CD4-positive, alpha-beta memory T cell (primary cell): ENCODE measurements at regions of chr6 and their contacts with region 1.

Region 1: GRCh38 chr6:151390276-151391032 is 905 bp downstream of the ZBTB2 start:
- DNase-seq: peak; percentile 98 to 99 (median 99)
- H3K4me3 ChIP-seq: peak overlapping the region in 1 of 2 donors; percentile 86
- H3K4me3 Mint-ChIP-seq: peak overlapping the region; percentile 29 to 98 (median 74)
- H3K27ac ChIP-seq: peak overlapping the region; percentile 83
- H3K27ac Mint-ChIP-seq: peak overlapping the region; percentile 74 to 99 (median 82)
- H3K4me1 ChIP-seq: peaks cover 71% of the 10 kb centered on the region
- H3K4me1 Mint-ChIP-seq: peaks cover 39 to 76% (median 55%) of the 10 kb centered on the region in 4 donors
- H3K27me3 ChIP-seq: no peaks in the 10 kb centered on the region
- H3K27me3 Mint-ChIP-seq: peaks cover 0 to 2% of the 10 kb centered on the region in 2 donors

Region 2: GRCh38 chr6:150865406-150866146 is 524.9 kb before region 1 on chr6 and contains the start of gene MTHFD1L:
- CTCF ChIA-PET with region 1: no interaction called
- POLR2A ChIA-PET with region 1: interaction called, 3 read pairs
- intact Hi-C with region 1: loop called (anchors 5 kb)
- DNase-seq: peak; percentile 58 to 68 (median 66)
- H3K4me3 ChIP-seq: peak within 1 kb of the TSS; percentile 38 to 65
- H3K4me3 Mint-ChIP-seq: peak within 1 kb of the TSS; percentile 84 to 95 (median 88)
- H3K27ac ChIP-seq: peak within 1 kb of the TSS; percentile 49
- H3K27ac Mint-ChIP-seq: peak within 1 kb of the TSS; percentile 79 to 90 (median 86)
- H3K4me1 ChIP-seq: peaks cover 14% of the 10 kb centered on the region
- H3K4me1 Mint-ChIP-seq: peaks cover 6 to 14% (median 8%) of the 10 kb centered on the region in 4 donors
- H3K27me3 ChIP-seq: no peaks in the 10 kb centered on the region
- H3K27me3 Mint-ChIP-seq: peaks cover 5 to 9% of the 10 kb centered on the region in 2 donors
- total RNA-seq, gene MTHFD1L: 8.6 to 11.1 TPM

Region 3: DNA sequence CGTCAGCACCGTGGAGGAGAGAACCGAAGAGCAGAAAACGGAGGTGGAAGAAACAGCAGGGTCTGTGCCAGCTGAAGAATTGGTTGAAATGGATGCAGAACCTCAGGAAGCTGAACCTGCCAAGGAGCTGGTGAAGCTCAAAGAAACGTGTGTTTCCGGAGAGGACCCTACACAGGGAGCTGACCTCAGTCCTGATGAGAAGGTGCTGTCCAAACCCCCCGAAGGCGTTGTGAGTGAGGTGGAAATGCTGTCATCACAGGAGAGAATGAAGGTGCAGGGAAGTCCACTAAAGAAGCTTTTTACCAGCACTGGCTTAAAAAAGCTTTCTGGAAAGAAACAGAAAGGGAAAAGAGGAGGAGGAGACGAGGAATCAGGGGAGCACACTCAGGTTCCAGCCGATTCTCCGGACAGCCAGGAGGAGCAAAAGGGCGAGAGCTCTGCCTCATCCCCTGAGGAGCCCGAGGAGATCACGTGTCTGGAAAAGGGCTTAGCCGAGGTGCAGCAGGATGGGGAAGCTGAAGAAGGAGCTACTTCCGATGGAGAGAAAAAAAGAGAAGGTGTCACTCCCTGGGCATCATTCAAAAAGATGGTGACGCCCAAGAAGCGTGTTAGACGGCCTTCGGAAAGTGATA is 40.7 kb before region 1 on chr6:
- CTCF ChIA-PET with region 1: interaction called, 3 read pairs
- POLR2A ChIA-PET with region 1: interaction called, 10 read pairs
- intact Hi-C with region 1: no loop called
- DNase-seq: no peak
- H3K4me3 ChIP-seq: no peak overlapping the region
- H3K4me3 Mint-ChIP-seq: peak overlapping the region in 1 of 8 donors; percentile 8
- H3K27ac ChIP-seq: no peak overlapping the region
- H3K27ac Mint-ChIP-seq: peak overlapping the region in 2 of 7 donors; percentile 1 to 39
- H3K4me1 ChIP-seq: peaks cover 13% of the 10 kb centered on the region
- H3K4me1 Mint-ChIP-seq: no peaks in the 10 kb centered on the region
- H3K27me3 ChIP-seq: no peaks in the 10 kb centered on the region
- H3K27me3 Mint-ChIP-seq: peaks cover 0 to 5% of the 10 kb centered on the region in 2 donors

Region 4: DNA sequence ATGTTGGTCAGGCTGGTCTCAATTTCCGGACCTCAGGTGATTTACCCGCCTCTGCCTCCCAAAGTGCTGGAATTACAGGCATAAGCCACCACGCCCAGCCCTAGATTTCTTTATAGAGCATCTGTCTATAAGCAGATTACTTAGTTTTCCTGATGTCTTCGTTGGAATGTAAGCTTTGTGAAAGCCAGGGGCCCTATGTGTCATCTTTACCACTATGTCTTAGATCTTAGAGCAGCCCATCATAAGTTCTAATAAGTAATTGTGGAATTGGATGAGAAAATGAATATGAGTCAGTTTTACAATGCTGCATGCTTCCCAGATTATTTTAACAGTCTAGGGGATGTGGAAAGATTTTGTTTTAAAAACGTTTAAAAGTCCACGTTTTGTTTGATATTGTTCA is 10.0 kb after region 1 on chr6:
- CTCF ChIA-PET with region 1: interaction called, 55 read pairs
- POLR2A ChIA-PET with region 1: interaction called, 32 read pairs
- intact Hi-C with region 1: loop called (anchors 1 kb)
- DNase-seq: no peak
- H3K4me3 ChIP-seq: no peak overlapping the region
- H3K4me3 Mint-ChIP-seq: peak overlapping the region in 5 of 8 donors; percentile 7 to 29 (median 17)
- H3K27ac ChIP-seq: no peak overlapping the region
- H3K27ac Mint-ChIP-seq: peak overlapping the region in 5 of 7 donors; percentile 20 to 90 (median 38)
- H3K4me1 ChIP-seq: peaks cover 62% of the 10 kb centered on the region
- H3K4me1 Mint-ChIP-seq: peaks cover 43 to 74% (median 59%) of the 10 kb centered on the region in 4 donors
- H3K27me3 ChIP-seq: no peaks in the 10 kb centered on the region
- H3K27me3 Mint-ChIP-seq: no peaks in the 10 kb centered on the region

Region 5: DNA sequence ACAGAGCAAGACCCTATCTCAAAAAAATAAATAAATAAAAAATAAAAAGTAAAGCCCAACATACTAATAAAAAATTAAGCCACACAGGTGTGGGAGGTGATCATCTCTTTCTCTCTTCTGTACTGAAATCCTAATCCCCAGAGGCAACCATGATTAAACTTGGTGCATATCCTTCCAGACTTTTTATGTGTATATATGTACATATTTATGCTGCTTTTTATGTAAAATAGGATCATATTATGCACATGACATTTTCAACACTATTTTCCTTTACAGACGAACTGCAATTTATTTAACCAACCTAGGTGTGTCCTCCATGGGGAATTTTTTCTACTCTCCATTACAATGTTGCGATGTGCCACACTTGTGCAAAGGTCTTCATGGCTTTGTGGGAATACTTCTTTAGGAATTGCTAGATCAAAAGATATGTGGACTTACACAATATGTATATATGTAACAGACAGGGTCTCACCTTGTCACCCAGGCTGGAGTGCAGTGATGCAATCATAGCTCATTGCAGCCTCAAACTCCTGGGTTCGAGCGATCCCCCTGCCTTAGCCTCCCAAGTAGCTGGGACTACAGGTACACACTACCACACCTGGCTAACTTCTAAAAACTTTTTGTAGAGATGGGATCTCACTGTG is 37.8 kb after region 1 on chr6:
- CTCF ChIA-PET with region 1: no interaction called
- POLR2A ChIA-PET with region 1: no interaction called
- intact Hi-C with region 1: no loop called
- DNase-seq: no peak
- H3K4me3 ChIP-seq: no peak overlapping the region
- H3K4me3 Mint-ChIP-seq: no peak overlapping the region
- H3K27ac ChIP-seq: no peak overlapping the region
- H3K27ac Mint-ChIP-seq: peak overlapping the region in 1 of 7 donors; percentile 9
- H3K4me1 ChIP-seq: no peaks in the 10 kb centered on the region
- H3K4me1 Mint-ChIP-seq: peaks cover 0 to 5% (median 0%) of the 10 kb centered on the region in 4 donors
- H3K27me3 ChIP-seq: no peaks in the 10 kb centered on the region
- H3K27me3 Mint-ChIP-seq: no peaks in the 10 kb centered on the region

Region 6: GRCh38 chr6:151451950-151452749 is 61.7 kb after region 1 on chr6 and contains the start of gene RMND1:
- CTCF ChIA-PET with region 1: interaction called, 4 read pairs
- POLR2A ChIA-PET with region 1: interaction called, 116 read pairs
- intact Hi-C with region 1: loop called (anchors 1 kb)
- DNase-seq: peak; percentile 98 to 100 (median 99)
- H3K4me3 ChIP-seq: peak within 1 kb of the TSS; percentile 85 to 99
- H3K4me3 Mint-ChIP-seq: peak within 1 kb of the TSS; percentile 91 to 98 (median 97)
- H3K27ac ChIP-seq: peak within 1 kb of the TSS; percentile 72
- H3K27ac Mint-ChIP-seq: peak within 1 kb of the TSS; percentile 93 to 99 (median 96)
- H3K4me1 ChIP-seq: peaks cover 32% of the 10 kb centered on the region
- H3K4me1 Mint-ChIP-seq: peaks cover 27 to 68% (median 53%) of the 10 kb centered on the region in 4 donors
- H3K27me3 ChIP-seq: no peaks in the 10 kb centered on the region
- H3K27me3 Mint-ChIP-seq: peaks cover 0 to 2% of the 10 kb centered on the region in 2 donors
- total RNA-seq, gene RMND1: 17.0 to 17.5 TPM

Region 7: GRCh38 chr6:152301764-152302568 is 911.5 kb after region 1 on chr6:
- CTCF ChIA-PET with region 1: no interaction called
- POLR2A ChIA-PET with region 1: interaction called, 11 read pairs
- intact Hi-C with region 1: loop called (anchors 5 kb)
- DNase-seq: peak; percentile 88 to 92 (median 90)
- H3K4me3 ChIP-seq: peak overlapping the region; percentile 78 to 85
- H3K4me3 Mint-ChIP-seq: peak overlapping the region; percentile 99 to 100 (median 100)
- H3K27ac ChIP-seq: peak overlapping the region; percentile 87
- H3K27ac Mint-ChIP-seq: peak overlapping the region; percentile 95 to 100 (median 98)
- H3K4me1 ChIP-seq: peaks cover 40% of the 10 kb centered on the region
- H3K4me1 Mint-ChIP-seq: peaks cover 29 to 47% (median 36%) of the 10 kb centered on the region in 4 donors
- H3K27me3 ChIP-seq: no peaks in the 10 kb centered on the region
- H3K27me3 Mint-ChIP-seq: no peaks in the 10 kb centered on the region